Right ventricle myocardium superior (tissue), 1 donor: ENCODE measurements at regions of chr10 and their contacts with region 1.

Region 1: DNA sequence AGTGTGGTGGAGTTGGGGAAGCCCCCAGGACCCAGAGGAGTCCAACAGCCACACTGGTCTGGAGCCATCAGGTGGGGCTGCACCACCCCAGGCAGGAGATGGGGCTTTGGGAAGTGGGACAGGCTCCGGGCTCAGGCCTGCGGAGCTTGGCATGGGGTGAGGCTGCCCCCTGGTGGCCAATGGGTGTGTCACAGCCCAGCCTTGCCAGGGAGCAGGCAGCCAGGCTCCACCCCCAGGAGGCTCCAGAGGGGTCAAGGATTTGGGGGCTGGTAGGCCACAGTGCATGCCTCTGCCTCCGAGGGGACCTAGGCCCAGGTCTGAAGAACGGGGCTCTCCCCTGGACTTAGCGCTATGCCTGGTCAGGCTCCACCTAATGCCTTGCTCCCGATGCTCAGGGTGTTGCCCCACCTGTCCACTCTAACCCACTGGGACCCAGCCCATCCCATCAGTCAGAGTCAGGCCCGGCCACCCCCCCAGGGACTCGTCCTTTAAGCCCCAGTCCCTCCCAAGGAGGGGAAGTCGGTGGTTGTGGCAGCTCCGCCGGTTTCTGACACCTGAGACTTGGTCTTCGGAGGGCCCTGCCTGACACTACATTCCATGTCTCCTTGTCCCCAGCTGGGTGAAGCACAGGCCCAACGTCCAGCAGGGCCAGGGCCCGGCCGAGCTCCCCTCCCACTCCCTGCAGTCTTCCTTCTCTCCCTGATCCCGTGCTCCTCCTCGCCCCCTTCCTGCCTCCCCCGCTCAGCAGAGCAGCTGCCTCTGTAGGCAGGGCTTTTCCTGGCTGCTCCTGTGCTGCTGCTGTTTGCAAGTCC is 11.3 kb upstream of the SAMD8 start:
- DNase-seq: peak; percentile 88
- ATAC-seq: peak; percentile 92

Region 2: DNA sequence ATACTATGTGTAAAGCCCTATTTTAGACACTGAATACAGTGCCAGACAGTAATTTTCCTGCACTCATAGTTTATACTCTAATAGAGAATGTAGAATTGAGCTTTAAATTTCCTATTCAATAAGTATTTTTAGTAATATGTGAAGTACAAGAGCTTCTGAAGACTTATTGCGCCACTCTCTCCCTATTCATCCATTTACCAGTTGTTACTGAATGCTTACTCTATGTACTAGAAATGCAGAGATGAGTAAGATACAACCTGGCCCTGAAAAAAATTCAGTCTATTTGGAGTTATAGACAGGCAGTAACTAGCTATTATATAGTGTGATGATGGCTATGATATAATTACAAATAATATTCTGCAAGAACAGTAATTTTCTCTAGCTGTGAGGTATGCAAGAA is 850.3 kb before region 1 on chr10:
- intact Hi-C with region 1: loop called (anchors 5 kb)
- DNase-seq: no peak
- ATAC-seq: no peak

Region 3: GRCh38 chr10:74262856-74263255 is 837.3 kb before region 1 on chr10:
- intact Hi-C with region 1: loop called (anchors 5 kb)
- DNase-seq: no peak
- ATAC-seq: no peak